ENCODE measurements at regions of chr19 and their contacts with region 1.

Region 1: GRCh38 chr19:12806239-12807081 is at the start of gene RNASEH2A:
- DNase-seq: peak; percentile 76 to 88 (median 83)
- ATAC-seq: peak; percentile 89 to 90
- H3K4me3 Mint-ChIP-seq: peak within 1 kb of the TSS; percentile 85 to 97 (median 93)
- H3K27ac Mint-ChIP-seq: peak within 1 kb of the TSS; percentile 80 to 95 (median 90)
- H3K4me1 Mint-ChIP-seq: peaks cover 13 to 22% (median 21%) of the 10 kb centered on the region in 4 donors
- H3K27me3 Mint-ChIP-seq: no peaks in the 10 kb centered on the region
- polyA plus RNA-seq, gene RNASEH2A: 16.3 to 22.6 (median 21.9) TPM

Region 2: DNA sequence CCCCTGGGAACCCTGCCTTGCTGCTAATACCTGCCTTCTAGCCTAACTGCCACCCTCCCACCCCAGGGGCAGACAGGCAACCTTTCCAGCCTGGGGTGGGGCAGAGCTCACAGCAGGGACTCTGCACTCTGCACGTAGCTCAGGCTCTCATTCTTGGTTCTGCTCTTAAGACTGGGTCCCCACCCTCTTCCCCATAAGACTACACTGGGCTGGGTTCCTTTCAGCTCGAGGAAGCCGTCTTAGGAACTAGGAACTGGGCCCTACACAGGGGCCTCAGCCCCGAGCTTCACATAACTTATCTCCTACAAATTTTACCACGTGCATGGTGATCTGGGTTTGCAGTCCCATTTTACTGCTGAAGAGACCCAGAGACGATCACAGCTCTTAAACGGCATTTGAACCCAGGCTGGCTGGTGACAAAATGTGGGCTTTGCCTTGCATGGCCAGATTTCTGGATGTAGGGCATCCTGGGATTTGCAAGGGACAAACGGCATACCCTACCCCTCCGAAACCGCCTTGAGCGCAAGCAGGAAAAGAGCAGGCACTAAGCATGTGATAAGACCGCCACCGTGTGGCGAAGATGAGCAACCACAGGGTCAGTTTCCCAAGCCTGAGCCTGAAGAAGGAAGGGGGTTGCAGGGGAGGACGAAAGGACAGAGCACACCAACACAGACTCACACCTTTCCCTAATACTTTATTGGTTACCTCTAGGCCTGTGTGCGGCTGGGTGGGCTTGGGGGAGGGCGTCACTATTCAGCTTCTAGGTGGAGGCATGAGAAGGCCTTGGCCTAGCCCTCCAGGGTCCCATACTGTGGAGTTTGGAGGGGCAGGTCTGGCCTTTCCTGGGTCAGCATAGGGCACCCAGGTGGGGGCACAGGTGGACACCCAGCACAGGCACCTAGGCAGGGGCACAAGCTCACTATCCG is 10.1 kb before region 1 on chr19:
- POLR2A ChIA-PET with region 1: interaction called, 61 read pairs
- DNase-seq: peak; percentile 58 to 86 (median 74)
- ATAC-seq: no peak
- H3K4me3 Mint-ChIP-seq: peak overlapping the region; percentile 61 to 88 (median 84)
- H3K27ac Mint-ChIP-seq: peak overlapping the region; percentile 90 to 98 (median 95)
- H3K4me1 Mint-ChIP-seq: peaks cover 19 to 45% (median 39%) of the 10 kb centered on the region in 4 donors
- H3K27me3 Mint-ChIP-seq: peaks cover 0 to 2% (median 0%) of the 10 kb centered on the region in 5 donors

Region 3: DNA sequence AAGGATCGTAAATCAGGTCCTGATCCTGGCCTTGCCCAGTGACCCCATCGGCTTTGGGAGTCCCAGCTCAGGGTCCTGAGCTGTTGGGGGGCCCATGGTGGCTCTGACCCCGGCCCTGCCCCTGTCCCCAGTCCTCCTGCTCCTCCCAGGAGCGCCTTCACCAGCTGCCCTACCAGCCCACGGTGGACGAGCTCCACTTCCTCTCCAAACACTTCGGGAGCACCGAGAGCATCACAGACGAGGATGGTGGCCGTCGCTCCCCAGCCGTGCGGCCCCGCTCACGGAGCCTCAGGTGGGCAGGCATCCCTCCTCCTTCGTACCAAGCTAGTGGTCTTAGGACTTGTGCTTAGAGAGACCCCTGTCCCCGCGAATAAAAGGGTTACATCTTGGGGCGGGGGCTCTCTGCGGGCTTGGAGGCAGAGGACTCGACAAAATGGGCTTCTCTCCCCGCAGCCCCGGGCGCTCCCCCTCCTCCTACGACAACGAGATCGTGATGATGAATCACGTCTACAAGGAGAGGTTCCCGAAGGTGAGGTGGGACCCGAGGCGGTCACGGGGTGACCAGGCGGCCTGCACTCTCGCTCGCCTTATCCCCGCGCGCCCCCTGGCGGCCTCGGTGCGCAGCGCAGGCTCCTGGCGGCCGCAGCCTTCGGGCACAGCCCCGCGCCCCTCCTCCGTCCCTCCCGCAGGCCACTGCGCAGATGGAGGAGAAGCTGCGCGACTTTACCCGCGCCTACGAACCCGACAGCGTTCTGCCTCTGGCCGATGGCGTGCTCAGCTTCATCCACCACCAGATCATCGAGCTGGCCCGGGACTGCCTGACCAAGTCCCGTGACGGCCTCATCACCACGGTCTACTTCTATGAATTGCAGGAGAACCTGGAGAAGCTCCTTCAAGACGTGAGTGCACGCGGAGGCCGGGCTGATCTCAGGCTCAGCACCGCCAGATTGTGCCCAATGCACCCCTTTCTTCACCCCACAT is 41.0 kb after region 1 on chr19:
- POLR2A ChIA-PET with region 1: no interaction called
- DNase-seq: peak; percentile 56 to 85 (median 79)
- ATAC-seq: peak; percentile 94 to 98
- H3K4me3 Mint-ChIP-seq: peak overlapping the region in 8 of 10 donors; percentile 29 to 67 (median 50)
- H3K27ac Mint-ChIP-seq: peak overlapping the region in 1 of 10 donors; percentile 76
- H3K4me1 Mint-ChIP-seq: peaks cover 3 to 7% (median 6%) of the 10 kb centered on the region in 4 donors
- H3K27me3 Mint-ChIP-seq: peaks cover 16 to 46% (median 28%) of the 10 kb centered on the region in 5 donors